ENCODE measurements at regions of chr2 and their contacts with region 1.

Region 1: GRCh38 chr2:231800493-231801091 is 14.3 kb downstream of the COPS7B start:
- H3K4me3 ChIP-seq: no peak overlapping the region
- H3K27ac ChIP-seq: no peak overlapping the region
- H3K4me1 ChIP-seq: no peaks in the 10 kb centered on the region
- CTCF ChIP-seq: no peak; the same call in 1 of the 2 replicates

Region 2: DNA sequence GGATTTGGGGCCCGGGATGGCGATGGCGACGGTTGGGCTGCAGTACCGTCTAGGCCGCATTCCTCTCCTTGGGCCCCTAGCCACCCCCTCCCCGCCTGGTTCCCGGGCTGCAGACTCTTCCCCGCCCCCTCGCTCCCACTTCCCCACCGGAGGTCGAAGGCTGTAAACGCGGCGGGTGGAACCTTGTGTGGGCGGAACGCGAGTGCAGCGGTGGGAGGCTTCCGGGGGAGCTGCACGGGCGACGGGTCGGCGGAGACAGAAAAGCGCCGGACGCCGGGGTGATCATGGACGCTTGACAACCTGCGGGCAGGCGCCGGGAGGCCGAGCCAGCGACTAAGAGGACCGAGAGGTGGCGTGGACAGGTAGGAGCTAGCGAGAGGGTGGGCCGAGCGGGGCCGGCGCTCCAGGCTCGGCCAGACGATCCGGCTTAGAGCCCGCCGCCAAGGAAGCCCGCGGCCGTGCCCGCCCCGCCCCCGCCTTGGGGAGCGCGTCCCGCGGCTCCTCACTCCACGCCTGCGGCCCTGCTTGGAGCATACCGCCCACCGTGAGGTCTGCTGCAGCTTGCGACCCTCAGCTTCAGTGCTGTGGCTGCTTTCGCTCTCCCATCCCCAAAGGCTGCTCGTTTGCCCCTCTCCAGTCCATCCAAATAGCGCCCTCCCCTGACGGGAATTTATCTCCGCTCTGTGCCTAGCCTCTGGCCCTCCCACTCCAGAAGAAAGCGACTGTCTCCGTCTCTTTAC is 14.2 kb before region 1 on chr2 and contains the start of gene COPS7B:
- CTCF ChIA-PET with region 1: interaction called, 18 read pairs
- POLR2A ChIA-PET with region 1: interaction called, 8 read pairs
- H3K4me3 ChIP-seq: peak within 1 kb of the TSS; percentile 88
- H3K27ac ChIP-seq: peak within 1 kb of the TSS; percentile 56
- H3K4me1 ChIP-seq: peaks cover 8% of the 10 kb centered on the region; the same call in 1 of the 2 replicates
- CTCF ChIP-seq: peak; percentile 88

Region 3: GRCh38 chr2:231810905-231811304 is 10.3 kb after region 1 on chr2:
- CTCF ChIA-PET with region 1: interaction called, 30 read pairs
- POLR2A ChIA-PET with region 1: no interaction called
- H3K4me3 ChIP-seq: no peak overlapping the region
- H3K27ac ChIP-seq: no peak overlapping the region
- H3K4me1 ChIP-seq: no peaks in the 10 kb centered on the region
- CTCF ChIP-seq: no peak

Region 4: GRCh38 chr2:231816327-231817026 is 15.9 kb after region 1 on chr2:
- CTCF ChIA-PET with region 1: interaction called, 30 read pairs
- POLR2A ChIA-PET with region 1: no interaction called
- H3K4me3 ChIP-seq: no peak overlapping the region
- H3K27ac ChIP-seq: no peak overlapping the region
- H3K4me1 ChIP-seq: no peaks in the 10 kb centered on the region
- CTCF ChIP-seq: no peak

Region 5: DNA sequence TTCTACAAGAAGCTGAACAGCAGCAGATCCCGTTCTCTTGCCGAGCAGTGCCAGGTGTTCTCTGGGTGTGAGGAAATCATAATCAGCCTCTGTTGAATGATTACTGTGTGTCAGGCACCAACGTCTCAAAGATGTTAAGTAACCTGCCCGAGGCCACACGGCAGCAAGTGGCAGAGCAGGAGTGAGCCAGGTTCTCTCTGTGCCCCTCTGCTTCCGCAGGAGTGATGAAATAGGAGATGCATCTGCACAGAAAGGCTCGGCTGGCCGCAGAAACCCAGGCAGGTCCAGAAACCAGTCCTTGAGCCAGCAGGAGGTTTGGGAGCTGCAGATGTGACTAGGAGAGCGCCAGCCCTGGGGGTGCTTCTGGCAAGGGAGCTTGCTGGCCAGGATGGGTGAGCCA is 54.1 kb after region 1 on chr2:
- CTCF ChIA-PET with region 1: interaction called, 26 read pairs
- POLR2A ChIA-PET with region 1: no interaction called
- H3K4me3 ChIP-seq: no peak overlapping the region
- H3K27ac ChIP-seq: no peak overlapping the region
- H3K4me1 ChIP-seq: no peaks in the 10 kb centered on the region
- CTCF ChIP-seq: no peak